ENCODE measurements at regions of chr6 and their contacts with region 1.

Region 1: GRCh38 chr6:109455502-109456282 is at the start of gene MICAL1:
- DNase-seq: peak; percentile 89
- ATAC-seq: peak; percentile 75
- H3K4me3 Mint-ChIP-seq: peak within 1 kb of the TSS; percentile 97
- H3K27ac Mint-ChIP-seq: peak within 1 kb of the TSS; percentile 99
- H3K4me1 Mint-ChIP-seq: peaks cover 75% of the 10 kb centered on the region
- H3K27me3 Mint-ChIP-seq: no peaks in the 10 kb centered on the region
- total RNA-seq, gene MICAL1: 50.5 to 53.2 TPM

Region 2: GRCh38 chr6:109440331-109441068 is 15.2 kb before region 1 on chr6 and contains the starts of genes PPIL6 and SMPD2:
- CTCF ChIA-PET with region 1: interaction called, 24 read pairs
- POLR2A ChIA-PET with region 1: interaction called, 72 read pairs
- DNase-seq: peak; percentile 82
- ATAC-seq: peak; percentile 88
- H3K4me3 Mint-ChIP-seq: peak within 1 kb of the TSS; percentile 90
- H3K27ac Mint-ChIP-seq: peak within 1 kb of the TSS; percentile 82
- H3K4me1 Mint-ChIP-seq: peaks cover 29% of the 10 kb centered on the region
- H3K27me3 Mint-ChIP-seq: no peaks in the 10 kb centered on the region
- total RNA-seq, gene PPIL6: 0.16 TPM in 1 of 2 experiments, not detected in the other
- total RNA-seq, gene SMPD2: 15.5 to 15.6 TPM

Region 3: DNA sequence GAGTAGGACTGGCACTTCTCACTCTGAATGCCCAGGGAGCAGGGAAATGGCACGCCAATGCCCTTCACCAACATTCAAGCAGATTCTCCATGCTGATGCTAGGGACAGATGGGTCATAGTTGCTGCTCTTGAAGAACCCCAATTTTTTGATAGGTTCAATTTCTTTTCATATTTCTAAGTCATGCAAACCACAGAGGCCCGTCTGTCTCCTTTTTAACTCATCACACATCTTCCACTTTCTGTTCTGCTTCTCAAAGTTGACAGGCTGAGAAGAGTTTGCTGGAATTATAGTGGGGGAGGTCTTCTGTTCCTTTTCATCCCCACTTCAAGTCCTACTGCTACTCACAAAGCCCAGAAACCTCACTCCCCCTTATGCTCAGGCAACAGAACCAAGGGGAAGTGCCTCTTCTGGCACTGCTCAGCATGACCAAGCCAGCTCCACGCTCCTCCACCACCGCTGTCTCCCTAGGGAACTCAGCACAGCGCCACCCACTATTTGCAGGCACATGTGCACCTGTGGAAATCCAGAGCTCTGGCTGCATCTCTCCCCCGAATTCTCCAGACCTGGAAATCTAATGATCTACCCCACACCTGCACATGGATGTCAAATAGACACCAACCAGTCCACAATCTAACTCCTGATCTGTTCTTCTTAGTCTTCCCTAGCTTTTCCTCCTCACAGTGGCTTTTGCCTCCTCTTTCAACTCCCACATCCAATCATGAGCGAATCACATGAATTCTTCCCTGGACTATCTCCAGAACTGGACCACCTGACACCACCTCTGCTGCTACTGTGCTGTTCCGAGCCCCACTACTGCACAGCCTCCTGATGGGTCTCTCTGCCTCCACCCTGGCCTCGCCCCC is 16.7 kb after region 1 on chr6:
- CTCF ChIA-PET with region 1: interaction called, 10 read pairs
- POLR2A ChIA-PET with region 1: interaction called, 9 read pairs
- DNase-seq: no peak
- ATAC-seq: no peak
- H3K4me3 Mint-ChIP-seq: no peak overlapping the region
- H3K27ac Mint-ChIP-seq: peak overlapping the region; percentile 35
- H3K4me1 Mint-ChIP-seq: peaks cover 61% of the 10 kb centered on the region
- H3K27me3 Mint-ChIP-seq: no peaks in the 10 kb centered on the region

Region 4: GRCh38 chr6:109482905-109483735 is 27.4 kb after region 1 on chr6 and contains the start of gene ZBTB24:
- CTCF ChIA-PET with region 1: interaction called, 3 read pairs
- POLR2A ChIA-PET with region 1: interaction called, 40 read pairs
- DNase-seq: peak; percentile 92
- ATAC-seq: peak; percentile 85
- H3K4me3 Mint-ChIP-seq: peak within 1 kb of the TSS; percentile 85
- H3K27ac Mint-ChIP-seq: peak within 1 kb of the TSS; percentile 85
- H3K4me1 Mint-ChIP-seq: peaks cover 47% of the 10 kb centered on the region
- H3K27me3 Mint-ChIP-seq: peaks cover 9% of the 10 kb centered on the region
- total RNA-seq, gene ZBTB24: 16.0 to 16.3 TPM

Region 5: GRCh38 chr6:109491207-109491938 is 35.7 kb after region 1 on chr6:
- CTCF ChIA-PET with region 1: interaction called, 4 read pairs
- POLR2A ChIA-PET with region 1: interaction called, 10 read pairs
- DNase-seq: peak; percentile 66
- ATAC-seq: peak; percentile 97
- H3K4me3 Mint-ChIP-seq: peak overlapping the region; percentile 56
- H3K27ac Mint-ChIP-seq: peak overlapping the region; percentile 94
- H3K4me1 Mint-ChIP-seq: peaks cover 32% of the 10 kb centered on the region
- H3K27me3 Mint-ChIP-seq: peaks cover 9% of the 10 kb centered on the region

Measured in activated CD8-positive, alpha-beta T cell treated with anti-CD3 and anti-CD28 coated beads, Interleukin-2, amount 10 ng/mL, durations not matched to agents 7 days and 5 days (primary cell).